Activated CD4-positive, alpha-beta memory T cell treated with anti-CD3 and anti-CD28 coated beads for 36 hours (primary cell): ENCODE measurements at regions of chr9 and their contacts with region 1.

Region 1: DNA sequence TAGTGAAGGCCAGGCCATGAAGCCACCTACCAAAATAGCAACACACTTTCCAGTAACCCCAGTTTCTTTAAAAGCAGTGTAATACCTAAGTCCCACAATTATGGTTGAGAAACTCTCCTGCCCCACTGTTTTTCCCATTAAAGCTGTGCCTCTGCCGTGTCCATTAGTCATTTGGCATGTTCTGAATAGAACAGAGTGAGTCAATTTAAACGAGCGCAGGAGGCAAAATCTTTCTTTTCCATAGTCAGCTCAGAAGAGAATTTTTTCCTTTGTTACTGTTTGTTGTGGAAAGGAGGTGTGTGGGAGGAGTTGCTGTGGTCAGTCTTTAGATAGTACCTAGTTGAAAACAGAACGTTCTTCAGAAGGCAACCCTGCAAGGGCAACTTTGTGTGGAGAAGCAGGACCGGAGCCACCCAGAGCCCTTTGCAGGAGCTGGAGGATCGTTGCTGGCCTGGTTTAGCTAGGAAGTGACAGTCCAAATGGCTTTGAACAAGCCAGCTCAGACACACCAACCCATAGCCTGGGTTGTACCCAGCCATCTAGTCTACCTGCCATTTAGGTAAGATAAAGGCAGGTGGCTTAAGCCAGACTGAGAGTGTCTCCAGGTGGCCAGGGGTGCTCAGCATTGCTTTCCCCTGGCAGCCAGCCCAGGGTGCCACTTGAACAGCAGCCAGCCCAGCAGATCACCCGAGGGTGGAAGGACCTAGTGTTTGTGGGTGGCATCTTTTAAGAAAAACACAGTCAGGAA is 30.4 kb downstream of the GADD45G start:
- DNase-seq: peak; percentile 16
- H3K4me3 Mint-ChIP-seq: no peak overlapping the region
- H3K27ac Mint-ChIP-seq: no peak overlapping the region
- H3K4me1 Mint-ChIP-seq: peaks cover 11% of the 10 kb centered on the region
- H3K27me3 Mint-ChIP-seq: no peaks in the 10 kb centered on the region

Region 2: GRCh38 chr9:89613912-89614892 is 21.0 kb before region 1 on chr9:
- CTCF ChIA-PET with region 1: no interaction called
- POLR2A ChIA-PET with region 1: no interaction called
- intact Hi-C with region 1: loop called (anchors 1 kb)
- DNase-seq: no peak
- H3K4me3 Mint-ChIP-seq: no peak overlapping the region
- H3K27ac Mint-ChIP-seq: no peak overlapping the region
- H3K4me1 Mint-ChIP-seq: peaks cover 15% of the 10 kb centered on the region
- H3K27me3 Mint-ChIP-seq: no peaks in the 10 kb centered on the region

Region 3: DNA sequence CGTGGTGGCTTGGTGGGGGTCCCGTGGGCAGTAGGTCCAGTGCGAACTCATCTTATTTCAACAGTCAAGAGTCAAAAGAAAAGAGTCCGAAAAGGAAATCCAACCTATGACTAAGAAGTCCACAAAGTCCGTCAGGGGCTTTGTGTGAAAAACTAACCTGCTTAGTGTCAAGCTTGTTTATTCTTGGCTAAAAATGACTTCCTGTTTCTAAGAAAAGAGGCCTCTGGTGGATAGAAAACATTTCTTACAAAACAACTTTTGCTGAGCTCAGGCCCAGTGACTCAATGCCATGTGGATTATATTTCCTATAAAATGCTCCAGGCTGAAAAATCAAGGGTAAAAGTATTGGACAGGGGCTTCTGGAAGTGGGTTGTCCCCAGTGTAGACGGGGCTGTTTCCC is 75.5 kb after region 1 on chr9:
- CTCF ChIA-PET with region 1: no interaction called
- POLR2A ChIA-PET with region 1: no interaction called
- intact Hi-C with region 1: no loop called
- DNase-seq: no peak
- H3K4me3 Mint-ChIP-seq: no peak overlapping the region
- H3K27ac Mint-ChIP-seq: no peak overlapping the region
- H3K4me1 Mint-ChIP-seq: peaks cover 36% of the 10 kb centered on the region
- H3K27me3 Mint-ChIP-seq: no peaks in the 10 kb centered on the region